Posterior vena cava (tissue), 2 donors: ENCODE measurements at regions of chr16 and their contacts with region 1.

Region 1: DNA sequence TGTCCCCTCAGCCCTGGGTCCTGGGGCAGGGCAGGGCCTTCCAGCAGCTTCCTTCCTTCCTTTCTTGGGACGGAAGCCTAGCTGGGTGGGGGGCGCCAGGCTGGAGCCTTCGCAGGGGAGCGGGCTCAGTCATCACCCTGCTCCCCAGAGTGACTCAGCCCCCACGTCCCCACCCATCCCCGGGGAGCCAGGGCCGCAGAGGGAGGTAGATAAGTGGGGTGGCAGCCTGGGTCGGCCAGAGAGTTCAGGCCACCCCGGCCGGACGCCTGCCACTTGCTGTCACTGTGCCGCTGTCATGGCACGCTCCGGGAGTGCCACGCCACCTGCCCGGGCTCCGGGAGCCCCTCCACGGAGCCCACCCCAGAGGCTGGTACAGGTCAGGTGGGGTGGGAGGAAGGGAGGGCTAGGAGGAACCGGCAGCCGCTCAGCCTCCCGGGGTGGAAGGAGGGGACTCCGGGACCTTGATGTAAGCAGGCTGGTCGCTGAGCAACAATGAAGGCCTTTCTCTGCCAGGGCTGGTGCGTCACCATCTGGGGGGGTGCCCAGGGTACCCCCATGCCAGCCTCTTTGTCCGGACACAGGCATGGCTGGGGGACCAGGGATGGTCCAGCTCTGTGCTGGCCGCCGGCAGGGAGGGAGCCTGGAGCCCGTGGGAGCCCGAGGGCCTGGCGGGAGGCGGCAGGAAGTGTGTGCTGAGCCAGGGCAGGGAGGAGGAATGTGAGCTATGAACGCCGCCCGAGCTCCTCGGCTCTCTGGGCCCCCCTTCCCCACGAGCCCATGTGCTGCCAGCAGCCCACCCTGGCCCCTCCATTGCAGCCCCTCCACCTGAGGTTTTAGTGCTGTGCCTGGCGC is 6.6 kb downstream of the NHERF2 start:
- DNase-seq: peak; percentile 90

Region 2: GRCh38 chr16:2090777-2091546 is 57.7 kb after region 1 on chr16:
- intact Hi-C with region 1: loop called in 1 of 2 experiments (anchors 10 kb)
- DNase-seq: no peak